OCI-LY7 (cell line): ENCODE measurements at regions of chr1 and their contacts with region 1.

Region 1: DNA sequence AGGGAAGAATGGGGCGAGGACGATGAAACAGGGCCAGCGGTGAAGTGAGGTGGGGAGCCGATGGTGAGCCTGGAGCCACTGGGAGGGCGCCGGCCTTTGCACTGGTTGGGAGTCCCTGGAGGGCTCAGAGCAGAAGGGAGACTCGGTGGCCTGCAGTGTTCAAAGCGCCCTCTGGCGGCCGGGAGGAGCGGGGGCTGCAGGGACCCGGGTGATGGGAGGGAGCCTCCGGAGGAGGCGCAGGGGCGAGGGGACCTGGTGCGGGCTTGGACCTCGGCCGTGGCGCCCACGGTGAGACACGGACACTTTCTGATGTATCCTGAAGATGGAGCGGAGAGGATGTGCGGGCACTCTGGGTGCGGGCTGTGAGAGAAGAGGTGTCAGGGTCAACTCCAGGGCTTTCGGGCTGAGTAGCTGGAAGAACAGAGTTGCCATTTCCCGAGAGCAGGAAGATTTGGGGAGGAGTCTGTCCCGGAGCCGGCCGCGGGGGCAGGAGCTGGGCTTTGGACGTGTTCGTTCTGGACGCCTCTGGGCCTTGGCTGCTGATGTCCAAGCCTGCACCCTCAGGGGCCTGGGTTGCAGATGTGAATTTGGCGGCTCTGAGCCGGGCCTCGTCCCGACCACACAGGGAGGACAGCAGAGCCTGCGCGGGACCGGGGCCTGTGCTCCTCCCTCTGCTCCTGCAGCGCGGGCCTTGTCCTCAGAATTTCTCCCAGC is 29.7 kb downstream of the HEYL start:
- DNase-seq: peak; percentile 58
- H3K4me3 ChIP-seq: no peak overlapping the region
- H3K27ac ChIP-seq: no peak overlapping the region
- H3K4me1 ChIP-seq: peaks cover 3% of the 10 kb centered on the region
- CTCF ChIP-seq: peak; percentile 79

Region 2: GRCh38 chr1:39653546-39654031 is 43.8 kb after region 1 on chr1:
- CTCF ChIA-PET with region 1: interaction called, 9 read pairs
- POLR2A ChIA-PET with region 1: interaction called, 3 read pairs
- intact Hi-C with region 1: loop called (anchors 1 kb)
- DNase-seq: peak; percentile 73
- H3K4me3 ChIP-seq: no peak overlapping the region
- H3K27ac ChIP-seq: no peak overlapping the region
- H3K4me1 ChIP-seq: peaks cover 5% of the 10 kb centered on the region
- CTCF ChIP-seq: peak; percentile 93

Region 3: GRCh38 chr1:39720094-39720999 is 110.6 kb after region 1 on chr1:
- CTCF ChIA-PET with region 1: no interaction called
- POLR2A ChIA-PET with region 1: no interaction called
- intact Hi-C with region 1: loop called (anchors 2 kb)
- DNase-seq: peak; percentile 76
- H3K4me3 ChIP-seq: no peak overlapping the region
- H3K27ac ChIP-seq: no peak overlapping the region
- H3K4me1 ChIP-seq: no peaks in the 10 kb centered on the region
- CTCF ChIP-seq: peak; percentile 91

Region 4: GRCh38 chr1:39761525-39762260 is 151.9 kb after region 1 on chr1:
- CTCF ChIA-PET with region 1: no interaction called
- POLR2A ChIA-PET with region 1: no interaction called
- intact Hi-C with region 1: no loop called
- DNase-seq: no peak
- H3K4me3 ChIP-seq: no peak overlapping the region
- H3K27ac ChIP-seq: no peak overlapping the region
- H3K4me1 ChIP-seq: no peaks in the 10 kb centered on the region
- CTCF ChIP-seq: no peak

Region 5: GRCh38 chr1:39799770-39800470 is 190.1 kb after region 1 on chr1:
- CTCF ChIA-PET with region 1: no interaction called
- POLR2A ChIA-PET with region 1: interaction called, 10 read pairs
- intact Hi-C with region 1: loop called (anchors 5 kb)
- DNase-seq: peak; percentile 66
- H3K4me3 ChIP-seq: peak overlapping the region; percentile 54
- H3K27ac ChIP-seq: peak overlapping the region; percentile 52
- H3K4me1 ChIP-seq: peaks cover 11% of the 10 kb centered on the region
- CTCF ChIP-seq: peak; percentile 73; the same call in 1 of the 2 replicates